CD4-positive, alpha-beta T cell (primary cell): ENCODE measurements at regions of chr2 and their contacts with region 1.

Region 1: GRCh38 chr2:27050281-27050995 is 1.0 kb upstream of the AGBL5 start:
- DNase-seq: peak; percentile 86 to 97 (median 92)
- ATAC-seq: peak; percentile 57
- H3K4me3 ChIP-seq: peak overlapping the region; percentile 76
- H3K4me3 Mint-ChIP-seq: peak overlapping the region; percentile 100
- H3K27ac ChIP-seq: peak overlapping the region; percentile 77 to 83
- H3K27ac Mint-ChIP-seq: peak overlapping the region; percentile 100
- H3K4me1 ChIP-seq: peaks cover 20% of the 10 kb centered on the region
- H3K4me1 Mint-ChIP-seq: peaks cover 27% of the 10 kb centered on the region
- H3K27me3 ChIP-seq: no peaks in the 10 kb centered on the region
- H3K27me3 Mint-ChIP-seq: peaks cover 15% of the 10 kb centered on the region
- CTCF ChIP-seq: peak; percentile 42

Region 2: GRCh38 chr2:26820932-26821331 is 229.5 kb before region 1 on chr2:
- CTCF ChIA-PET with region 1: no interaction called
- POLR2A ChIA-PET with region 1: no interaction called
- intact Hi-C with region 1: no loop called
- DNase-seq: no peak
- ATAC-seq: no peak
- H3K4me3 ChIP-seq: no peak overlapping the region
- H3K4me3 Mint-ChIP-seq: no peak overlapping the region
- H3K27ac ChIP-seq: no peak overlapping the region
- H3K27ac Mint-ChIP-seq: no peak overlapping the region
- H3K4me1 ChIP-seq: no peaks in the 10 kb centered on the region
- H3K4me1 Mint-ChIP-seq: no peaks in the 10 kb centered on the region
- H3K27me3 ChIP-seq: peaks cover 0 to 3% of the 10 kb centered on the region in 2 experiments
- H3K27me3 Mint-ChIP-seq: peaks cover 25% of the 10 kb centered on the region
- CTCF ChIP-seq: no peak

Region 3: DNA sequence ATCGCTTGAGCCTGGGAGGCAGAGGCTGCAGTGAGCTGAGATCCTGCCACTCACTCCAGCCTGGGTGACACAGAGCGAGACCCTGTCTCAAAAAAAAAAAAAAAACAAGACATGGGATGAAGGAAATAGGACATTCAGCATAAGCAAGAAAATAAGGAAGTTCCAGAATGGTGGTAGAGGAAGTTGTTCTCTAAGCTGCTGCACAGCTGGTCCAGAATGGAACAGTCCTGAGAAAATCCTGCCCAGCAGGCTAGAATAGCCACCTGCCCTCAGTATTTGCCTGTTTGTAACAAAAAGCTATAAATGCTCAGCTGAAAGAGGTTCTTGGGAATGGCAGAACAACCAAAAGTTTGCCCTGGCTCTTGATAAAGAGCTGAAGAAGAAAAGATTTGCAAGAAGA is 91.1 kb before region 1 on chr2:
- CTCF ChIA-PET with region 1: interaction called, 18 read pairs
- POLR2A ChIA-PET with region 1: interaction called, 3 read pairs
- intact Hi-C with region 1: loop called in 1 of 2 experiments (anchors 1 kb)
- DNase-seq: no peak
- ATAC-seq: no peak
- H3K4me3 ChIP-seq: no peak overlapping the region
- H3K4me3 Mint-ChIP-seq: no peak overlapping the region
- H3K27ac ChIP-seq: no peak overlapping the region
- H3K27ac Mint-ChIP-seq: no peak overlapping the region
- H3K4me1 ChIP-seq: peaks cover 5% of the 10 kb centered on the region
- H3K4me1 Mint-ChIP-seq: no peaks in the 10 kb centered on the region
- H3K27me3 ChIP-seq: peaks cover 7 to 10% of the 10 kb centered on the region in 2 experiments
- H3K27me3 Mint-ChIP-seq: peaks cover 54% of the 10 kb centered on the region
- CTCF ChIP-seq: no peak

Region 4: GRCh38 chr2:27071277-27071989 is 21.0 kb after region 1 on chr2 and contains the start of gene OST4:
- CTCF ChIA-PET with region 1: interaction called, 9 read pairs
- POLR2A ChIA-PET with region 1: interaction called, 301 read pairs
- intact Hi-C with region 1: loop called (anchors 1 kb)
- DNase-seq: peak; percentile 76 to 95 (median 86)
- ATAC-seq: peak; percentile 86
- H3K4me3 ChIP-seq: peak within 1 kb of the TSS; percentile 99
- H3K4me3 Mint-ChIP-seq: peak within 1 kb of the TSS; percentile 99
- H3K27ac ChIP-seq: peak within 1 kb of the TSS; percentile 90 to 91
- H3K27ac Mint-ChIP-seq: peak within 1 kb of the TSS; percentile 98
- H3K4me1 ChIP-seq: peaks cover 74% of the 10 kb centered on the region
- H3K4me1 Mint-ChIP-seq: peaks cover 84% of the 10 kb centered on the region
- H3K27me3 ChIP-seq: no peaks in the 10 kb centered on the region
- H3K27me3 Mint-ChIP-seq: no peaks in the 10 kb centered on the region
- CTCF ChIP-seq: no peak
- total RNA-seq, gene OST4: 232 to 254 TPM

Region 5: GRCh38 chr2:27086090-27086723 is 35.8 kb after region 1 on chr2:
- CTCF ChIA-PET with region 1: interaction called, 10 read pairs
- POLR2A ChIA-PET with region 1: interaction called, 113 read pairs
- intact Hi-C with region 1: loop called (anchors 1 to 2 kb)
- DNase-seq: peak; percentile 91 to 99 (median 98)
- ATAC-seq: peak; percentile 92
- H3K4me3 ChIP-seq: peak overlapping the region; percentile 70
- H3K4me3 Mint-ChIP-seq: peak overlapping the region; percentile 91
- H3K27ac ChIP-seq: peak overlapping the region; percentile 65 to 70
- H3K27ac Mint-ChIP-seq: peak overlapping the region; percentile 81
- H3K4me1 ChIP-seq: peaks cover 50% of the 10 kb centered on the region
- H3K4me1 Mint-ChIP-seq: peaks cover 32% of the 10 kb centered on the region
- H3K27me3 ChIP-seq: no peaks in the 10 kb centered on the region
- H3K27me3 Mint-ChIP-seq: no peaks in the 10 kb centered on the region
- CTCF ChIP-seq: peak; percentile 75

Region 6: GRCh38 chr2:27133905-27134780 is 83.7 kb after region 1 on chr2 and contains the start of gene PREB:
- CTCF ChIA-PET with region 1: interaction called, 4 read pairs
- POLR2A ChIA-PET with region 1: interaction called, 27 read pairs
- intact Hi-C with region 1: no loop called
- DNase-seq: peak; percentile 94 to 99 (median 98)
- ATAC-seq: peak; percentile 97
- H3K4me3 ChIP-seq: peak within 1 kb of the TSS; percentile 90
- H3K4me3 Mint-ChIP-seq: peak within 1 kb of the TSS; percentile 98
- H3K27ac ChIP-seq: peak within 1 kb of the TSS; percentile 55 to 79
- H3K27ac Mint-ChIP-seq: peak within 1 kb of the TSS; percentile 94
- H3K4me1 ChIP-seq: peaks cover 30% of the 10 kb centered on the region
- H3K4me1 Mint-ChIP-seq: peaks cover 19% of the 10 kb centered on the region
- H3K27me3 ChIP-seq: no peaks in the 10 kb centered on the region
- H3K27me3 Mint-ChIP-seq: no peaks in the 10 kb centered on the region
- CTCF ChIP-seq: no peak
- total RNA-seq, gene PREB: 12.3 to 12.6 TPM

Region 7: DNA sequence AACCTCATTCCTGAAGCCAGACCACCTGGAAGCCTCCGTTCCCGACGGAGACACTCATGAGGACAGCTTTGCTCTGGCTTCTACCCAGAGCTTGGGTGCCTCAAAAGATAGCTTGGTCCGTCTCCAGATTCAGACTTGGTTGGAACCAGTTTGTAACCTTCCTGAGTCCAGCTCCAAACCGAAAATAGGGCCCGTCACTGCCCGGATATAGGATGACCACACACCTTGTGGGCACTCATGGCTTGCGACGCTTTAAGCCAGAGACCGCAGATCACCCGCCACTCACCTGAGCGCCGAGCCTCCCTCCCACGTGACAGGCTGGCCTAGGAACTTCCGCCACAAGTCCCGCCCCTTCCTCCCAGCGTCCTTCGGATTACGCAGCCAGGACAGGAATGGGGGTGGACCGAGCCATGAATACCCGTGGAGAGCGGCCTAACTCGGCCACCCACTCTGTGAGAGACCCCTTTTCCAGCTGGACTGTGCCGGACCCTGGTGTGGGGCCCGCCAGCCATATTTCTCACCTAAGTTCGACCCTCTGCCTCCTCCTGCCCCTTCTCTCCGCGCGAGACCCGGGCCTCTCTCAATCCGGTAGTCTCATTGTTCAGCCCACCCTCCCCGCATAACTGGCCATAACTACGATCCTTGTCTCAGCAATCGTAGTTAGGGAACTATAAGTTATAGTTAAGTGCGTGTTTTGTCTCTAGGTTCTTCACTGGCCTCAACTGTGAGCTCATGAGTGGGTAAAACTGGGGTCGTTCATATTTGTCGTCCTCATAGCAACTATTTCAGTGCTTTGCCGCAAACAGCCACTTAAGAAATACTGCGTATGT is 272.5 kb after region 1 on chr2 and contains the start of gene MPV17:
- CTCF ChIA-PET with region 1: no interaction called
- POLR2A ChIA-PET with region 1: interaction called, 11 read pairs
- intact Hi-C with region 1: no loop called
- DNase-seq: peak; percentile 77 to 93 (median 82)
- ATAC-seq: peak; percentile 97
- H3K4me3 ChIP-seq: peak within 1 kb of the TSS; percentile 86
- H3K4me3 Mint-ChIP-seq: peak within 1 kb of the TSS; percentile 100
- H3K27ac ChIP-seq: peak within 1 kb of the TSS; percentile 90 to 93
- H3K27ac Mint-ChIP-seq: peak within 1 kb of the TSS; percentile 98
- H3K4me1 ChIP-seq: peaks cover 25% of the 10 kb centered on the region
- H3K4me1 Mint-ChIP-seq: peaks cover 31% of the 10 kb centered on the region
- H3K27me3 ChIP-seq: no peaks in the 10 kb centered on the region
- H3K27me3 Mint-ChIP-seq: no peaks in the 10 kb centered on the region
- CTCF ChIP-seq: no peak
- total RNA-seq, gene MPV17: 29.3 to 31.0 TPM